ENCODE measurements at regions of chr6 and their contacts with region 1.

Region 1: GRCh38 chr6:36615018-36615761 is 21.0 kb downstream of the SRSF3 start:
- DNase-seq: peak; percentile 51

Region 2: GRCh38 chr6:36839749-36840431 is 224.7 kb after region 1 on chr6:
- intact Hi-C with region 1: loop called (anchors 10 kb)
- DNase-seq: no peak

Region 3: GRCh38 chr6:36851149-36851614 is 236.0 kb after region 1 on chr6:
- intact Hi-C with region 1: loop called (anchors 5 kb)
- DNase-seq: no peak